RWPE1 (cell line): ENCODE measurements at regions of chr11 and their contacts with region 1.

Region 1: DNA sequence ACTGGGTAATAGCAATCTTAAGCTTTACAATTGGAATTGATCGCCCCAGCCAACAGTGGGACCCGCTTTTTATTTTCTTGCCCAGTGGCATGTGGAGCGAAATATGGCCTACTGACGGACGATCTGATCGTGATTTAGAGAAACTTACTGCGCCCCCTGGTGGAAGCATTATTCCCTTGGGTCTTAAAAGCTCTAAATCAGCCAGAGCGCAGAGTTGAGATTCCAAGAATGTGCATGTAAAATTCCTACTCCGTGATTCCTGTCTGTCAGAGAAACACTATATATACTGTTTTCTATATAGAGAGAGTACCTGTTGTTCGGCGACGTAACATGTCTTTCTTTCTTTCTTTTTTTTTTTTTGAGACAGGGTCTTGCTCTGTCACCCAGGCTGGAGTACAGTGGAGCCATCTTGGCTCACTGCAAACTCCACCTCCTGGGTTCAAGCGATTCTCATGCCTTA is 3.7 kb upstream of the DPF2 start:
- DNase-seq: peak; percentile 61
- H3K27ac ChIP-seq: peak overlapping the region; percentile 49
- CTCF ChIP-seq: peak; percentile 79

Region 2: DNA sequence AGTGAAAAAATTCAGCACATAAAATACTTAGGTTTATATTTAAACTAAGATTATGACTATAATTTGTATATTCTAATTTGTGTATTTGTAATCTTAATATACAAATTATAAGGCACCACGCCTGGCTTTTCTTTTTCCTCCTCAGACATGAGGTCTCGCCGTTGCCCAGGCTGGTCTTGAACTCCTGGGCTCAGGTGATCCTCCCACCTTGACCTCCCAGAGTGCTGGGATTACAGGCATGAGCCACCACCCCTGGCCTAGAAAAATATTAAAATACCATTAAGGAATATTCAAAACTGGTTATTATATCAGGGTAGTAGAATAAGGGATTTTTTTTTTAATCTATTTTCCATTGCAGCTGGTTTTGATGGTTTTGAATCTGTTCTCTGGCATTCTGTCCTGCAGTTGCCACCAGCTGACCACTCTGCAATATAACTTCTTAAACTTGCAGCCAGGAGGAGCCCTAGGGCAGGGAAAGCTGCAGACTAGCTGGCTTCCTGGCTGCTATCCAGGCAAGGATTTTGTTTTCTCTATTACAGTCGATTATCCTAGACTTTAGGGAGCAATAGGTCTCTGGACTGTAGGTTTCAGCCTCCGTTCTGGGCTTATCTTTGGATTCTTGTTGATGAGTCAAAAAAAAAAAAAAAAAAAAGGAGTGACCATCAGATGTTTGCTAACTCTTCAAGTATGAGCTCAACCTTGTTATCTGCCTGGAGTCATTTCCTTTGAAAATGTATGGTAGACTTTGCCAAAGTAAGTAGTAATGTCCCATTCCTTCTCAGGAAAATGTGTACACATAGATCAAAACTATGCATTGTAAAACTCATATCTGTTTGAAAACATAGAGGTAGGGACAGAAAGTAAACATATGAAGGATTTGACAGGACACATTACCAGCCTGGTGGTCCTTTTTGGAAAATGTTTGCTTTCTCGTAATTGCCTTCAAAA is 55.0 kb before region 1 on chr11:
- CTCF ChIA-PET with region 1: interaction called, 25 read pairs
- POLR2A ChIA-PET with region 1: interaction called, 7 read pairs
- DNase-seq: peak; percentile 67
- H3K27ac ChIP-seq: peak overlapping the region; percentile 60
- CTCF ChIP-seq: peak; percentile 77